B cell (primary cell): ENCODE measurements at regions of chr7 and their contacts with region 1.

Region 1: GRCh38 chr7:47945261-47946001 is 2.8 kb downstream of the PKD1L1 start:
- DNase-seq: peak; percentile 72
- ATAC-seq: peak; percentile 62
- H3K4me3 ChIP-seq: no peak overlapping the region
- H3K4me3 Mint-ChIP-seq: no peak overlapping the region
- H3K27ac ChIP-seq: no peak overlapping the region
- H3K27ac Mint-ChIP-seq: no peak overlapping the region
- H3K4me1 ChIP-seq: no peaks in the 10 kb centered on the region
- H3K4me1 Mint-ChIP-seq: no peaks in the 10 kb centered on the region
- H3K27me3 ChIP-seq: no peaks in the 10 kb centered on the region
- H3K27me3 Mint-ChIP-seq: no peaks in the 10 kb centered on the region
- CTCF ChIP-seq: peak; percentile 87

Region 2: DNA sequence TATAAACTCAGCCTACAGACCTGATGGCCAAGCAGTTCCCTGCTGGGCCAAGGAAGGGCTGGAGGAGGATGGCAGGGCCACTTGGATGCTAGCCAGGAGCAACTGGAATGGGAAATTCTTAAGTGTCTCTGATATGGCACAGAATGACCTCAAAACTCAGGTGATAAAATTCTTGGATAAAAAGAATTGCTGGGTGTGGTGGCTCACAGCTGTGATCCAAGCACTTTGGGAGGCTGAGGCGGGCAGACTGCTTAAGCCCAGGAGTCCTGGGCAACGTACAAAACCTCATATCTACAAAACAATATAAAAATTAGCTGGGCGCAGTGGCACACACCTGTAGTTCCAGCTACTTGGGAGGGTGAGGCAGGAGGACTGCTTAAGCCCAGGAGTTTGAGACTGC is 16.8 kb after region 1 on chr7:
- CTCF ChIA-PET with region 1: interaction called, 11 read pairs
- POLR2A ChIA-PET with region 1: no interaction called
- intact Hi-C with region 1: no loop called
- DNase-seq: no peak
- ATAC-seq: no peak
- H3K4me3 ChIP-seq: no peak overlapping the region
- H3K4me3 Mint-ChIP-seq: no peak overlapping the region
- H3K27ac ChIP-seq: no peak overlapping the region
- H3K27ac Mint-ChIP-seq: no peak overlapping the region
- H3K4me1 ChIP-seq: no peaks in the 10 kb centered on the region
- H3K4me1 Mint-ChIP-seq: no peaks in the 10 kb centered on the region
- H3K27me3 ChIP-seq: no peaks in the 10 kb centered on the region
- H3K27me3 Mint-ChIP-seq: no peaks in the 10 kb centered on the region
- CTCF ChIP-seq: no peak

Region 3: DNA sequence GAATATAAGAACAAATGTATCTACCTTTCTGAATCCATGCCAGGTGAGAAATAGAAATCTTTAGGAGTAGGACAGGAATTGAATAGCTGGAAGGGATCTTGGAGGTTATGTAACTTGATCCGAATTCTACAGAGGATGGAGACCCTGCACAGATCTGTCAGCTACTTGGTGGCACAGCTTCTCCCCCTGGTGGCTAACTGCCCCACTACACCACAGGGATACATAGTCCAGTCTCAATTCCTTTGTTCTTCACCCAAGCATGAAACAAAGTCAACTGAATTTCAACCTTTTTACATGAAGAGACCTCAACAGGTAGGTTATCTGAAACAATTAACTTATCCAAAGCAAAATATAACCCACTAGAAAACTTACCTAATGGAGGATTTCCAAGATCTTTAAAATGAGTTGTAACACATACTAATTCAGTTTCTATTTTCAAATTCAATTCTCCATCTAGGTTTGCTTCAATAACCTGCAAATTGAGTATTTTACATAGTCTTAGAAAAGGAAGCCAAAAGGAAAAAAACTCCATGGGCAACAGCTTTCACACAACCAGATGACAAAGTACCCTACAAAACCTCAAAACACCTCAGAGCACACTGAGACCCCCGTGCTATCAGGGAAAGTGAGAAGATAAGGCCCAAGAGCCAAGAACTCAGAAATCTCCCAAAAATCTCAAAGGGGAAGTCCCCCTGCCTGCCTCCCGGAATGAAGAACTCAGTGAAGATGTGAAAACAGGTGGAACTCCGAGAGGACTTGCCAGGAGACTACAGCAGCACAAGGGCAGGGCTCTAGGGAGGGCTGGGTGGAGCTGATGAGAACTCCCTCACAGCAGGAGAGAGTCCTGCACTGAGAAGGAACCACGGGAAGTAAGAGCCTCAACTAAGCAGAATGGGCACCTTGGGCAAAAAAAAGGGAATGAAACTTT is 23.7 kb after region 1 on chr7:
- CTCF ChIA-PET with region 1: interaction called, 11 read pairs
- POLR2A ChIA-PET with region 1: no interaction called
- intact Hi-C with region 1: loop called (anchors 1 kb)
- DNase-seq: peak; percentile 62
- ATAC-seq: peak; percentile 71
- H3K4me3 ChIP-seq: no peak overlapping the region
- H3K4me3 Mint-ChIP-seq: no peak overlapping the region
- H3K27ac ChIP-seq: no peak overlapping the region
- H3K27ac Mint-ChIP-seq: no peak overlapping the region
- H3K4me1 ChIP-seq: peaks cover 0 to 4% of the 10 kb centered on the region in 2 donors
- H3K4me1 Mint-ChIP-seq: peaks cover 8% of the 10 kb centered on the region
- H3K27me3 ChIP-seq: no peaks in the 10 kb centered on the region
- H3K27me3 Mint-ChIP-seq: no peaks in the 10 kb centered on the region
- CTCF ChIP-seq: peak; percentile 91

Region 4: DNA sequence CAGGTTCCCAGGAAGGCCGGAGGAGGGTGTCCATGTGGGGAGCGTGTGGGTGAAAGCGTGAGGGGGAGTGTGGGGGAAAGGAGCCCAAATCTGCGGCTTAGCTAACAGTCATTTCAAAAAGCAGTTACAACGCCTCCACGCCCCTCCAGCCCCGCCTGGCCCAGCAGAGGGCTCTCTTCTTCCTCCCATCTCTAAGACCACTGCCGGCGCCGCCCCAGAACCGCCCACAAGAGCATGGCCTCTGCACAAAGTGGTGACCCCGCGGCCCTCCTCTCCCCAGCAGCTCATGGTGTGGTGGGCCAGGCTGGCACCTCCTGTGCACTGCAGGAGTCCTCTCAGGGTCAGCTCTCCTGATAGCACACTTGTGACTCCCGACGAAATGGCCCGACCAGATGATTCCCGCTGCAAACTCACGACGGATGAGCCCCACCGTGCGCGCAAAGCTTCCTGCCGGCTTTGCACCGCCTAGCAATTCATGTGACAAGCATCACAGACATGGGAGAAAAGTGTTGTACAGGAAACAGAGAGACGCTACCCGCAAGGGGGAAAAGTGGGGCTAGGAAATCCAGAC is 46.4 kb after region 1 on chr7:
- CTCF ChIA-PET with region 1: interaction called, 21 read pairs
- POLR2A ChIA-PET with region 1: no interaction called
- intact Hi-C with region 1: loop called (anchors 1 kb)
- DNase-seq: peak; percentile 89
- ATAC-seq: peak; percentile 99
- H3K4me3 ChIP-seq: peak overlapping the region; percentile 39 to 86 (median 69)
- H3K4me3 Mint-ChIP-seq: peak overlapping the region; percentile 96
- H3K27ac ChIP-seq: peak overlapping the region; percentile 60 to 82
- H3K27ac Mint-ChIP-seq: peak overlapping the region; percentile 88
- H3K4me1 ChIP-seq: peaks cover 9 to 12% of the 10 kb centered on the region in 2 donors
- H3K4me1 Mint-ChIP-seq: peaks cover 12% of the 10 kb centered on the region
- H3K27me3 ChIP-seq: no peaks in the 10 kb centered on the region
- H3K27me3 Mint-ChIP-seq: no peaks in the 10 kb centered on the region
- CTCF ChIP-seq: peak; percentile 71

Region 5: GRCh38 chr7:48109848-48110663 is 164.6 kb after region 1 on chr7:
- CTCF ChIA-PET with region 1: interaction called, 99 read pairs
- POLR2A ChIA-PET with region 1: no interaction called
- intact Hi-C with region 1: loop called (anchors 1 kb)
- DNase-seq: peak; percentile 85
- ATAC-seq: peak; percentile 96
- H3K4me3 ChIP-seq: no peak overlapping the region
- H3K4me3 Mint-ChIP-seq: no peak overlapping the region
- H3K27ac ChIP-seq: no peak overlapping the region
- H3K27ac Mint-ChIP-seq: no peak overlapping the region
- H3K4me1 ChIP-seq: peaks cover 0 to 3% of the 10 kb centered on the region in 2 donors
- H3K4me1 Mint-ChIP-seq: peaks cover 4% of the 10 kb centered on the region
- H3K27me3 ChIP-seq: no peaks in the 10 kb centered on the region
- H3K27me3 Mint-ChIP-seq: peaks cover 3% of the 10 kb centered on the region
- CTCF ChIP-seq: peak; percentile 97

Region 6: DNA sequence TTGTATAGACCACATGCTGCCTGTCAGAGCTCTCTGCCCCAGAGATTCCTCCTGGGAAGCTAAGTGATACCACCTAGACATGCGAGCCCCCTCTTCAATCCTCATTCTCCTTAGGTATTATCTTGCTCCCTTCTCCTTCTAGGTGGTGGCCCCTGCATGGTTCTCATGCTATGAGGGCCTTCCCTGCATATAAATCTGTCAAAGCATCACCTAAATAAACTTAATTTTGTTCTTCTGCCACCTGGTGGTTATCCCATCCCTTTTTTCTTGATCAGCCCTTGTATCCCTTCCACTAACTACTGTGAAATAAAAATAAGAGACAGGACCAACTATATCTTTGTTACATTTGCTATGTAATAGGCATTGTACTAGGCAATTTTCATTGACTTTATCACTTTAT is 1221.0 kb after region 1 on chr7:
- CTCF ChIA-PET with region 1: no interaction called
- POLR2A ChIA-PET with region 1: no interaction called
- intact Hi-C with region 1: loop called (anchors 10 kb)
- DNase-seq: no peak
- ATAC-seq: no peak
- H3K4me3 ChIP-seq: no peak overlapping the region
- H3K4me3 Mint-ChIP-seq: no peak overlapping the region
- H3K27ac ChIP-seq: no peak overlapping the region
- H3K27ac Mint-ChIP-seq: no peak overlapping the region
- H3K4me1 ChIP-seq: no peaks in the 10 kb centered on the region
- H3K4me1 Mint-ChIP-seq: no peaks in the 10 kb centered on the region
- H3K27me3 ChIP-seq: no peaks in the 10 kb centered on the region
- H3K27me3 Mint-ChIP-seq: no peaks in the 10 kb centered on the region
- CTCF ChIP-seq: no peak